ENCODE measurements at regions of chr7 and their contacts with region 1.

Region 1: DNA sequence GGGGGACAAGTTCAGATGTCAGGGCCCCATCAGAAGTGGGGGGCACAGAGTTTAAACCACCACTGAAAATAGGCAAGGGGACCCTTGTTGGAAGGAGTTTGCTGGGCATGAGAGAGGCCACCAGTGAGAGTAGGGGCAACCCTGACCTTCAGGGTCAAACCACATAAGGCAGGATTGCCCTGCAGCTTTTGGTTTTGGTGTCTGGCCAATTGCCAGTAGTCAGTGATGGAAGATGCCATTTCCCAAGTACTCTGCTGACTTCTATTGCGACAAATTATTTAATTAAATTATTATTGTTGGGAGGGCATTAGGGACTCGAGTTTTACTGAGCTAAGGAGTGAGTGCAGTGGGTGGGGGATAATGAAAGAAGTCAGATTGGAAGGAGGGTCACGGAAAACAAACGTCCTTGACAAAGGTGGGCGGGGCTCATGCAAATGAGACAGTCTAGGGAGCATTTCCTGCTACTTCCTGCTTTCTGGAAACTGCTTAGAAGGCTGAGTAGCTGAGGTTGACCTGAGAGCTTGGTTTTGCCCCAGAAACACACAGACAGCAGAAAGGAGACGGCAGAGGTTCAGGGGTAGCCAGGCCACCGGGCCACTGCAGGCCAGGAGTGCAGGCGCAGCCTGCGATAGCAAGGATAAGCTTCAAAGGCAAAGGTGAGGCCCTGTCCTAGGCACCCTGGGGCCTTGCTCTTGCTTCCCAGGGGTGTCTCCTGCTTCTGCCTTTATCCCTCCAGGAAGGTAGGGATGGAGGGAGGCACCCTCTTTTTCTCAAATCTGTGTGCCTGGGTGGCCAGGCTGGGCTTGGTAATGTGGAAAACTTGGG is 74.1 kb upstream of the ANLN start:
- DNase-seq: no peak
- ATAC-seq: peak; percentile 47
- H3K4me3 Mint-ChIP-seq: no peak overlapping the region
- H3K27ac Mint-ChIP-seq: no peak overlapping the region
- H3K4me1 Mint-ChIP-seq: peaks cover 13% of the 10 kb centered on the region
- H3K27me3 Mint-ChIP-seq: no peaks in the 10 kb centered on the region; the same call in 1 of the 2 replicates
- CTCF ChIP-seq: no peak

Region 2: GRCh38 chr7:35985126-35985754 is 330.3 kb before region 1 on chr7:
- CTCF ChIA-PET with region 1: interaction called, 33 read pairs
- POLR2A ChIA-PET with region 1: no interaction called
- DNase-seq: peak; percentile 82
- ATAC-seq: peak; percentile 99
- H3K4me3 Mint-ChIP-seq: no peak overlapping the region
- H3K27ac Mint-ChIP-seq: no peak overlapping the region
- H3K4me1 Mint-ChIP-seq: peaks cover 4% of the 10 kb centered on the region; the same call in 1 of the 2 replicates
- H3K27me3 Mint-ChIP-seq: no peaks in the 10 kb centered on the region
- CTCF ChIP-seq: peak; percentile 73

Region 3: DNA sequence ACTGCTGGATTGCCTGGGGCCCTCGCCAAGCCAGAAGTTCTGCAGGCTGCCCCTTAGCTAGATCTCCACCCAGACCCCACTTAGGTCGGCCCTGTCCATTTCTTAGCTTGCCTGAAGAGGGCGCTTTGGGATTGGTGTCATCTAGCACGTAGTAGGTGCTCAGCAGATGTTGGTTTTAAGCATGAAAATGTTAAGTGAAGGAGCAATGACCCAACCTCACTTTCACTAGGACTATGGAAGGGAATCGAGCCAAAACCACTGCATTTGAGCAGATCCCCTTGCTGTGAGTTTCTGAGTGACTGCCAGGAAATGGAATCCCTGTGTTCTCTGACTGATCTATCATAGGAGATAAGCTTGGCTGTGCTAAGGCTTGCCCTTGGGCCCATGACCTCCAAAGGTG is 294.2 kb before region 1 on chr7:
- CTCF ChIA-PET with region 1: interaction called, 16 read pairs
- POLR2A ChIA-PET with region 1: interaction called, 3 read pairs
- DNase-seq: peak; percentile 72
- ATAC-seq: peak; percentile 99
- H3K4me3 Mint-ChIP-seq: no peak overlapping the region
- H3K27ac Mint-ChIP-seq: no peak overlapping the region
- H3K4me1 Mint-ChIP-seq: peaks cover 8% of the 10 kb centered on the region
- H3K27me3 Mint-ChIP-seq: no peaks in the 10 kb centered on the region
- CTCF ChIP-seq: peak; percentile 74

Region 4: DNA sequence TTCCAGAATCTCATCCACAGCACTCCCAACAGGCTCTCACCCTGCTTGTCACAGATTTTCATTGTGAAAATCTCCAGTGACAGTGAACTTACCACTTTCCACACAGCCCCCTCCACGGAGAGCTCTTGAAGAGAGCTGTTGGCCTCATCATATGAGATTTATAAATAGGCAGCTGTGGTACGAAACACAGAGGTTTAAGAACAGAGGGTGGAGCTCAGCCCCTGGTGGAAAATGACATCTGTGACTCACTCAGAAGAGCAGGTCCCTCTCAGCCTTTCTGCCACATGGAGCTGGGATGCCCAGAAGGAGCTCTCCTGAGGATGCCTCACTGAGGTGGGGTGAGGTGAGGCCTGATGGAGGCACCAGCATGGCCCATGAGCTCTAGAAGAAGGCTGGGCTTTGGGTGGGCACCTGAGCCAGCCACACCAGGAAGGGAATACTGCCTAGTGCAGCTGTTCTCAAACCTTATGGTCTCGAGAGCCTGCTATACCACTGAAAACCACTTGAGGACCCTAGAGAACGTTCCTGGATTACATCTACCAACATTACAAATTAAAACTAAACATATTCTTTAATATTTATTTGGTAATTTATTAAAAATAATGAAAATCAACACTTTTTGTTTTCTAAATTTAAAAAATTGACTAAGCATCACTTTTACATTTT is 188.3 kb before region 1 on chr7:
- CTCF ChIA-PET with region 1: interaction called, 12 read pairs
- POLR2A ChIA-PET with region 1: no interaction called
- DNase-seq: no peak
- ATAC-seq: peak; percentile 70
- H3K4me3 Mint-ChIP-seq: no peak overlapping the region
- H3K27ac Mint-ChIP-seq: no peak overlapping the region
- H3K4me1 Mint-ChIP-seq: peaks cover 5% of the 10 kb centered on the region; the same call in 1 of the 2 replicates
- H3K27me3 Mint-ChIP-seq: no peaks in the 10 kb centered on the region; the same call in 1 of the 2 replicates
- CTCF ChIP-seq: no peak

Region 5: DNA sequence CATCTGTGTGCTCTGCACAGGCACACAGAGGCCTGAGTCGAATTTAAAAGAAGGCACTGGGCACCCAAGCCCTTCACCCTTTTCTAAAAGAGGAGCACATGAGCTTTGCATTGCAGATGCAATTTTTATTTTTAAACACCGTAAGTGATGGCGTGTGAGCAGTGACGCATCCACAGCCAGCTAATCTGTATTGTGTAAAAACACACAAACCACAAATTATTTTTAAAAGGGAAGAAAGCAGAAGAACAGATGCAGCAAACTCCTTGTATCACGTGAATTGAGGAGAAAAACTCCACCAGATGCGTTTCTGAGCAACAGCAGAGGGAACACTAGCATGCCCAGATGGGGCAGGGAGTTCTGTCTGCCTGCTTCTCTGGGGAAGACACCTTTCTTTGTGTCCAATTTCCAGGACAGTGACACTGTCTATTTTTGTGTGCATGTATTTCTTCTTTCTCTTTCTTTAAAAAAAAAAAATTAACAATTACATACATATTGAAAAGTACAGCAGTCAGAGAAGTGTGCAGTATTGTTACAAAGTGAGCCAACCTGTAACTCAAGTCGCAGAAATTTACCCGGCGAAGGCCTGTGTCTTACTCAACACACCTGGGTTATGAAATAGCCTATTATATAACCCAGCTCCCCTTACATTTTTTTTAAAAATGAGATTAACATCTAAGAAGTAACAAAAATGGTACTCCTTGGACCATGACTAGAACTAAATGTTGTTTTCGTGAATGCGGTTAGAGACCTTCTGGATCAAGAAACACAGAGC is 123.3 kb before region 1 on chr7:
- CTCF ChIA-PET with region 1: no interaction called
- POLR2A ChIA-PET with region 1: no interaction called
- DNase-seq: no peak
- ATAC-seq: no peak
- H3K4me3 Mint-ChIP-seq: no peak overlapping the region
- H3K27ac Mint-ChIP-seq: peak overlapping the region; percentile 45; the same call in 1 of the 2 replicates
- H3K4me1 Mint-ChIP-seq: no peaks in the 10 kb centered on the region
- H3K27me3 Mint-ChIP-seq: no peaks in the 10 kb centered on the region
- CTCF ChIP-seq: no peak

Region 6: GRCh38 chr7:36283711-36284130 is 31.8 kb before region 1 on chr7:
- CTCF ChIA-PET with region 1: interaction called, 13 read pairs
- POLR2A ChIA-PET with region 1: no interaction called
- DNase-seq: no peak
- ATAC-seq: no peak
- H3K4me3 Mint-ChIP-seq: no peak overlapping the region
- H3K27ac Mint-ChIP-seq: peak overlapping the region; percentile 76
- H3K4me1 Mint-ChIP-seq: peaks cover 76% of the 10 kb centered on the region
- H3K27me3 Mint-ChIP-seq: no peaks in the 10 kb centered on the region; the same call in 1 of the 2 replicates
- CTCF ChIP-seq: no peak

Region 7: GRCh38 chr7:36301914-36302771 is 13.4 kb before region 1 on chr7:
- CTCF ChIA-PET with region 1: interaction called, 26 read pairs
- POLR2A ChIA-PET with region 1: no interaction called
- DNase-seq: no peak
- ATAC-seq: peak; percentile 9; the same call in 1 of the 2 replicates
- H3K4me3 Mint-ChIP-seq: no peak overlapping the region
- H3K27ac Mint-ChIP-seq: no peak overlapping the region
- H3K4me1 Mint-ChIP-seq: peaks cover 37% of the 10 kb centered on the region
- H3K27me3 Mint-ChIP-seq: no peaks in the 10 kb centered on the region
- CTCF ChIP-seq: no peak

Measured in WTC11 (cell line).